Dendritic cell treated with granulocyte-macrophage colony-stimulating factor and Interleukin-4, amounts not matched to agents 40 ng/mL and 50 ng/mL, for 4 days (primary cell): ENCODE measurements at regions of chr16 and their contacts with region 1.

Region 1: GRCh38 chr16:84952335-84953189 is 58.8 kb downstream of the ZDHHC7 start:
- H3K4me3 Mint-ChIP-seq: no peak overlapping the region
- H3K27ac Mint-ChIP-seq: no peak overlapping the region
- H3K4me1 Mint-ChIP-seq: peaks cover 19% of the 10 kb centered on the region
- H3K27me3 Mint-ChIP-seq: peaks cover 9% of the 10 kb centered on the region

Region 2: DNA sequence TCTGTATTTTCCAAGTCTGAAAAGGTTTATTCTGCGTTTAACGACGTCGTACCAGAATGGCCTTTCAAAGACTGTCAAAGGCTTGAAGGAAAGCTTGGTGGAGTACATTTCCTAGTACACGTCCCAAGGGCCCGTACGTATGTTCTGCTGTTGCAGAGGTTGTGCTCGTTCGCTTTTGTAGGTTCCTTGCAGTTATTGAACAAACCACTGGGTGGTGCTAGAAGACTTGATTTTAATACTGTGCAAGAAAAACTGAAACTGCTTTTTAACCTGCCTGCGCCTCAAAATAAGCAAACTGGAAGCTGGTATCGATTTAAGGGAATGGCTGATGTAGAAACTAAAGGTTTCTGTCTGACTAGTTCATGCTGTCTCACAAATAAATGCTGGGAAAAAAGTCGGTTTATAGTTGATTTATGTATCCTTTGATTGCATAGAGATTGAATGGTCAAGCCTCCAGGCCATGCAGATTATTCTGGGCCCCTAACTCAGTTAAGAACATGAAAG is 198.2 kb before region 1 on chr16:
- intact Hi-C with region 1: loop called (anchors 1 kb)
- H3K4me3 Mint-ChIP-seq: peak overlapping the region; percentile 53
- H3K27ac Mint-ChIP-seq: peak overlapping the region; percentile 62
- H3K4me1 Mint-ChIP-seq: peaks cover 72% of the 10 kb centered on the region
- H3K27me3 Mint-ChIP-seq: no peaks in the 10 kb centered on the region

Region 3: GRCh38 chr16:84925092-84925772 is 27.3 kb before region 1 on chr16:
- intact Hi-C with region 1: loop called (anchors 1 kb)
- H3K4me3 Mint-ChIP-seq: no peak overlapping the region
- H3K27ac Mint-ChIP-seq: no peak overlapping the region
- H3K4me1 Mint-ChIP-seq: peaks cover 18% of the 10 kb centered on the region
- H3K27me3 Mint-ChIP-seq: no peaks in the 10 kb centered on the region

Region 4: DNA sequence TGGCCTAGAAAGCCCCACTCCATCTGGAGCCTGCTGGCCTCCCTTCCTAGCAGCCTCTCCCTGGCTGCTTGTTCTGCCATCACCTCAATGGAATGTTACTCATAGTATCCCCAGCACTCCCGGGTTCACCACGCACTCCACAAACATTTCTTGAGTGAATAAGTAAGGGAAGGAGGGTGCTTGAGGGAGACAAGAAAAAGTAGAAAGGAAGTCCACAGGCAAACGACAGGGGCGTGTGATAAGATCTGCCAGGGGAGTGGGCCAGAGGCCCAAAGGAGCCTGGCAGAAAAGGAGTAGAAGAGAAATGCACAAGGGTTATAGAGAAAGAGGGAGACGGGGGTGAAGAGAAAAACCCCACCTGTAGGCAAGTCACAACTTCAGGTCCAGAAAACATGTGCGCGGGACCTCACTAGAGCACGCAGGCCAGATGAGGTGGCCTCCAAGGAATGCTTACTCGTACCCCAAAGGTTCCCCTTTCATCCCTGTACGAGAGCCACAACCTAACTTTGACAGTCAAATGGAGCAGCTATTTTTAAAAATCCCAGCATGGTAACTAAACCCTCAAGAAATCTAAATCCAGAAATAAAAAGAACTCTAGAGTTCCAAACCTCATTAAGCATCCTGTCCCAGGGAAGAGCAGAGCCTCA is 52.1 kb after region 1 on chr16:
- intact Hi-C with region 1: no loop called
- H3K4me3 Mint-ChIP-seq: peak overlapping the region; percentile 76
- H3K27ac Mint-ChIP-seq: peak overlapping the region; percentile 96
- H3K4me1 Mint-ChIP-seq: peaks cover 82% of the 10 kb centered on the region
- H3K27me3 Mint-ChIP-seq: no peaks in the 10 kb centered on the region